Mammary epithelial cell (primary cell): ENCODE measurements at regions of chr19 and their contacts with region 1.

Region 1: GRCh38 chr19:45079063-45079910 is at the start of gene GEMIN7:
- DNase-seq: peak; percentile 69
- H3K4me3 ChIP-seq: peak within 1 kb of the TSS; percentile 94 to 100 (median 96)
- H3K27ac ChIP-seq: peak within 1 kb of the TSS; percentile 80
- H3K4me1 ChIP-seq: peaks cover 20% of the 10 kb centered on the region
- H3K27me3 ChIP-seq: no peaks in the 10 kb centered on the region
- CTCF ChIP-seq: no peak
- total RNA-seq, gene GEMIN7: 9.5 to 18.6 TPM

Region 2: GRCh38 chr19:44876930-44877535 is 202.3 kb before region 1 on chr19:
- CTCF ChIA-PET with region 1: no interaction called
- dilution Hi-C with region 1: no loop called
- in situ Hi-C with region 1: no loop called
- intact Hi-C with region 1: no loop called
- DNase-seq: no peak
- H3K4me3 ChIP-seq: no peak overlapping the region
- H3K27ac ChIP-seq: no peak overlapping the region
- H3K4me1 ChIP-seq: no peaks in the 10 kb centered on the region
- H3K27me3 ChIP-seq: no peaks in the 10 kb centered on the region
- CTCF ChIP-seq: no peak

Region 3: DNA sequence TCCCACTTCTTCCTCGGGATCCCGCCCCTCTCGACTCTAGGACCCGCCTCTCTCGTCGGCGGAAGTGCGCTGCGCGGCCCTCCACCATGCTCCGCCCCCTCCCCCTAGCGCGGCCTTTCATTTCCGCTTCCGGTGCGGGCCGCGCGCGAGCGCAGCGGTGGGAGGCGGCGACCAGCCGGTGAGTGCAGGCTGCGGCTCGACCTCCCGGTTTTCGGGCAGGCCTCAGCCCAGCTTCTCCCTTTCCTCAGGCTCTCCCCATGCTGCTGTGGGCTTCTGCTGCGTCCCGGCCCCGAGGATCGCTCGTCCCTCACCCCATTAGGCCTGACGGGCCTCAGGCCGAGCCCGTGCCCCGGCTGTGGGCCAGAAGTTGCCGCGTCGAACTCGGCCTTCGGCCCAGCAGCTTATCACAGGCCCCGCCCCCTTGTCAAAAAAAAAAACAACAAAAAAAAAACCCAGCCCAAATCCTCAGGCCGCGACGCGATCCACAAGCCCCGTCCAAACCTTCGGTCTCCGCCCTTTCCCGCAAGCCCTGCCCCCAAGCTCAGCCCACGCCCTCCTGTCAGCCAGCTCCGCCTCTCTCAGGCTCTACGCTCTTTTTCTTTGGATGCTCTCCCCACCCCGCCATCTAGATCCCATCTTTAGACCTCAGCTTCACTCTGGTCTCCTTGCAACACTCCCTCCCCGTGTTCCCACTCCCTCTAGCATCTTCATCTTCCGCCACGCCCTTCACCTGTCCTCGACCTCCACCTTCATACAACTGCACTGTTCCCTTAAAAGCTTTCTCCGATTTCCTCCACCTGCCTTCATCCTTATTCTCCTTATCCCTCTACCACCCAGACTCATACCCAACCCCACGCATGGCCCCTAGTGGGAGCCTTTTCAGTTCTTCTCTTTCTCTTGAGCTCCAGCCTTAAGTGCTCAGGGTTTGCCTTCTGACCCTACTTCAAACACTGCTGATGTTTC is 40.1 kb before region 1 on chr19 and contains the start of gene CLASRP:
- CTCF ChIA-PET with region 1: no interaction called
- dilution Hi-C with region 1: no loop called
- in situ Hi-C with region 1: no loop called
- intact Hi-C with region 1: loop called (anchors 2 kb)
- DNase-seq: peak; percentile 83
- H3K4me3 ChIP-seq: peak within 1 kb of the TSS; percentile 80 to 99 (median 98)
- H3K27ac ChIP-seq: peak within 1 kb of the TSS; percentile 92
- H3K4me1 ChIP-seq: peaks cover 11% of the 10 kb centered on the region
- H3K27me3 ChIP-seq: no peaks in the 10 kb centered on the region
- CTCF ChIP-seq: no peak
- total RNA-seq, gene CLASRP: 19.5 to 69.5 TPM

Region 4: DNA sequence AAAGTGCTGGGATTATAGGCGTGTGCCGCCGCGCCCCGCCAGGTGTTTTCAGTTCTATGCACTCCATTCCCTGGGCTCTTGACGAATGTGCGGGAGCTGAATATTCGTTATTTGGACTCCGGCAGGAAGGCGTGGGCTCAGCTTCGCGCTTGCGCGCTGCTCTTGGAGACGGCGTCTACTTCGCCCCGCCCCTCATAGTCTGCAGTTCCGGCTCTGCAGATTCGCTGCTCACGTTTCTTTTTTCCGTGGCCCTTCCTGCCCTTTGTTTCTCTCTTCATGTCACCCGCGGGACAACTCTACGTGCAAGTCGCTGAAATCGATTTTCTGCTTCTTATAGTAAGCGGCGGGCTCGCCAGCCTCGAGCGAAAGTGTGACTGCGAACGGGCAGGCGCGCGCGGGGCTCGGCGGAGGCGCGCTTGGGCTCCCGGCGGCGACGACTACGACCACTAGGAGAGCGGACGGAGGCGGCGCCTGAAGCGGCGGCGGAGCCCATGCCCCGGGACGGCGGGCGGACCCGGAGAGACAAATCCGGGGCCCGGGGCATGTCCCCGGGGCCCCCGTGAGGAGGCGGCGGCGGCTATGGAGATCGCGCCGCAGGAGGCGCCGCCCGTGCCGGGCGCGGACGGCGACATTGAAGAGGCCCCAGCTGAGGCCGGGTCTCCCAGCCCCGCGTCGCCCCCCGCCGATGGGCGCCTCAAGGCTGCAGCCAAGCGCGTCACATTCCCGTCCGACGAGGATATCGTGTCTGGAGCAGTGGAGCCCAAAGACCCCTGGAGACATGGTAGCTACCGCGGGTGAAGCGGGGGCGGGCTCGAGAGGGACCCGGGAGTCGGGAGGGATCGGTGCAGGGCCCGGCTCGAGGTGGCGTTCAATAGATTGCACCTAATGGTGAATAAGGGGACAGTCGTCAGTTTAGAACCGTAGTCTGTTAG is 13.7 kb after region 1 on chr19 and contains the start of gene PPP1R37:
- CTCF ChIA-PET with region 1: no interaction called
- dilution Hi-C with region 1: no loop called
- in situ Hi-C with region 1: no loop called
- intact Hi-C with region 1: loop called (anchors 1 kb)
- DNase-seq: peak; percentile 97
- H3K4me3 ChIP-seq: peak within 1 kb of the TSS; percentile 89 to 97 (median 95)
- H3K27ac ChIP-seq: peak within 1 kb of the TSS; percentile 94
- H3K4me1 ChIP-seq: peaks cover 31% of the 10 kb centered on the region
- H3K27me3 ChIP-seq: no peaks in the 10 kb centered on the region
- CTCF ChIP-seq: peak in 1 of 2 donors; percentile 31
- total RNA-seq, gene PPP1R37: 32.9 to 48.0 TPM

Region 5: GRCh38 chr19:45125926-45126493 is 46.7 kb after region 1 on chr19:
- CTCF ChIA-PET with region 1: no interaction called
- dilution Hi-C with region 1: no loop called
- in situ Hi-C with region 1: no loop called
- intact Hi-C with region 1: loop called (anchors 2 kb)
- DNase-seq: peak; percentile 39
- H3K4me3 ChIP-seq: no peak overlapping the region
- H3K27ac ChIP-seq: no peak overlapping the region
- H3K4me1 ChIP-seq: peaks cover 20% of the 10 kb centered on the region
- H3K27me3 ChIP-seq: no peaks in the 10 kb centered on the region
- CTCF ChIP-seq: peak; percentile 79 to 88

Region 6: GRCh38 chr19:45402298-45403070 is 323.2 kb after region 1 on chr19:
- CTCF ChIA-PET with region 1: no interaction called
- dilution Hi-C with region 1: no loop called
- in situ Hi-C with region 1: no loop called
- intact Hi-C with region 1: no loop called
- DNase-seq: peak; percentile 78
- H3K4me3 ChIP-seq: peak overlapping the region; percentile 90 to 92 (median 91)
- H3K27ac ChIP-seq: peak overlapping the region; percentile 94
- H3K4me1 ChIP-seq: peaks cover 32% of the 10 kb centered on the region
- H3K27me3 ChIP-seq: no peaks in the 10 kb centered on the region
- CTCF ChIP-seq: peak; percentile 40 to 82